CD4-positive, alpha-beta T cell (primary cell): ENCODE measurements at regions of chr11 and their contacts with region 1.

Region 1: DNA sequence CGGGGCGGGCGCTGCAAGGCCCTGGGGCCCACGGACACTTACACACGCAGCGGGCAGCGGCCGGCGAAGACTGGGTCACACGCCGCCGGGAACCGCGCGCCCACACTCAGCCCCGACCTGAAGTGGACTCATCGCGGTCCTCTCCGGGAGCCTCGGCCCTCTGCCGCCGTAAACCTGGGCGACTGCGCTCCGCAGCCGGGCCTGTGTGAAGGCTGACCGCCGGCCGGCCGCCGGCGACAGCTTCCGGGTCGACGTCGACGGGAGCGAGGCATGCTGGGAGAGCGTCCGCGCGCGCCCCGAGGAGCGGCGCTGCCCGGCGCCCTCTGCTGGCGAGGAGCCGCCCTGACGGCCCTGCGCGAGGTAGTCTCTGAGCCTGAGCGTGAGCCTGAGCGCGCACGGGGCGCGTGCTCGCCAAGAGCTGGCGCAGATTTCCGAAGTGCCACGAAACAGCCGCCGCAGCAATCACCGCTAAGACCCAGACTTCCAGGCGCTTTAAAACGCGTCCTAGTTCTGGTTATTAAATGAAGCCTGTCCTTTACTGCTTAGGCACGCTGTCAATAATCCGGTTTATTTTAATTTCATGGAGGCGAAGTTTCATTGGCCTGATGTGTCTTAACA is at the start of gene SNX19:
- DNase-seq: peak; percentile 79 to 96 (median 90)
- ATAC-seq: peak; percentile 99
- H3K4me3 ChIP-seq: peak within 1 kb of the TSS; percentile 87
- H3K4me3 Mint-ChIP-seq: peak within 1 kb of the TSS; percentile 91
- H3K27ac ChIP-seq: peak within 1 kb of the TSS; percentile 71 to 72
- H3K27ac Mint-ChIP-seq: peak within 1 kb of the TSS; percentile 87
- H3K4me1 ChIP-seq: peaks cover 28% of the 10 kb centered on the region
- H3K4me1 Mint-ChIP-seq: peaks cover 52% of the 10 kb centered on the region
- H3K27me3 ChIP-seq: no peaks in the 10 kb centered on the region
- H3K27me3 Mint-ChIP-seq: peaks cover 11% of the 10 kb centered on the region
- CTCF ChIP-seq: peak; percentile 85
- total RNA-seq, gene SNX19: 41.2 to 43.8 TPM

Region 2: DNA sequence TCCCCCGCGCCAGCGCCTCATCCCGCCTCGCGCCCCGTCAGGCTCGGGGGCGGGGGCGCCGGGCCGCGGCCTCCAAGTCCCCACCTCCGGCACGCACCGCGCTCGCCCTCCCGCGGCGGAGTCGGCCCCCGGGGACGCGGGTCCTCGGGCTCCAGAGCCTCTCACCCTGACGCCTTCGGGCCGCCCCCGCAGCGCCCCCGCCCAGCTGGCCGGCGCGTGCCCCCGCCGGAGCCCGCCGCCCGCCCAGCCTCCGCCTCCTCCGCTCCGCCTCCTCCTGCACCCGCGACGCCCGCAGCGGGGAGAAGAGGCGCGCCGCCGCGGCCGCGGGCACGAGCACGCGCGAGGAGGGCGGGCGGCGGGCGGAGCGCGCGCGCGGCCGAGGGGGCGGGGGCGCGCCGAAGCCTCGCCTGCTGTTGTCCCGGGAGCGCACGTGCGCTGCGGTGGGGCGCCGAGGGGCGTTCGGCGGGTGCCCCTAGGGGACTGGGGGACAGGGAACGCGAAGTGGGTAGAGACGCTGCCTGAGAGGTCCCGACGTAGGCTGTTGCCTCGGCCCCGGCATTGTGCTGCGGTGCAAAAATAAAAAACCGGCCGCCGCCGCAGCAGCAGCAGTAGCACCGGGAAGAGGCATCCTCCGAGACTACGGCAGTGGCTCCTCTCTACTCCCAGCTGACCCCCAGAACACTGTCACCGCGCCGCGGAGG is 1636.9 kb before region 1 on chr11:
- CTCF ChIA-PET with region 1: no interaction called
- POLR2A ChIA-PET with region 1: no interaction called
- intact Hi-C with region 1: loop called in 1 of 2 experiments (anchors 5 kb)
- DNase-seq: peak; percentile 50 to 89 (median 72)
- ATAC-seq: peak; percentile 80
- H3K4me3 ChIP-seq: peak overlapping the region; percentile 65
- H3K4me3 Mint-ChIP-seq: peak overlapping the region; percentile 88
- H3K27ac ChIP-seq: no peak overlapping the region
- H3K27ac Mint-ChIP-seq: peak overlapping the region; percentile 66
- H3K4me1 ChIP-seq: peaks cover 16% of the 10 kb centered on the region
- H3K4me1 Mint-ChIP-seq: peaks cover 41% of the 10 kb centered on the region
- H3K27me3 ChIP-seq: peaks cover 11 to 12% of the 10 kb centered on the region in 2 experiments
- H3K27me3 Mint-ChIP-seq: peaks cover 18% of the 10 kb centered on the region
- CTCF ChIP-seq: no peak

Region 3: GRCh38 chr11:129950101-129951091 is 966.0 kb before region 1 on chr11:
- CTCF ChIA-PET with region 1: no interaction called
- POLR2A ChIA-PET with region 1: no interaction called
- intact Hi-C with region 1: no loop called
- DNase-seq: peak in 2 of 14 experiments; percentile 2 to 15
- ATAC-seq: no peak
- H3K4me3 ChIP-seq: no peak overlapping the region
- H3K4me3 Mint-ChIP-seq: no peak overlapping the region
- H3K27ac ChIP-seq: no peak overlapping the region
- H3K27ac Mint-ChIP-seq: no peak overlapping the region
- H3K4me1 ChIP-seq: no peaks in the 10 kb centered on the region
- H3K4me1 Mint-ChIP-seq: no peaks in the 10 kb centered on the region
- H3K27me3 ChIP-seq: no peaks in the 10 kb centered on the region
- H3K27me3 Mint-ChIP-seq: no peaks in the 10 kb centered on the region
- CTCF ChIP-seq: no peak

Region 4: DNA sequence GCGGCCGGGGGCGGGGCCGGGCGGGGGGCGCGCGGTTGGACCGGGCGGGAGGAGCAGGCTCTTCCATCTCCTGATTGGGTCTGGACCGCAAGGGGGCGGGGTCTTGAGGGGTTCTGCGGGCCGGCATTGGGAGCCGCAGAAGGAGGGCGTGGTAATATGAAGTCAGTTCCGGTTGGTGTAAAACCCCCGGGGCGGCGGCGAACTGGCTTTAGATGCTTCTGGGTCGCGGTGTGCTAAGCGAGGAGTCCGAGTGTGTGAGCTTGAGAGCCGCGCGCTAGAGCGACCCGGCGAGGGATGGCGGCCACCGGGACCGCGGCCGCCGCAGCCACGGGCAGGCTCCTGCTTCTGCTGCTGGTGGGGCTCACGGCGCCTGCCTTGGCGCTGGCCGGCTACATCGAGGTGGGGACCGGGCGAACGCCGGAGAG is 846.7 kb before region 1 on chr11 and contains the start of gene APLP2:
- CTCF ChIA-PET with region 1: no interaction called
- POLR2A ChIA-PET with region 1: no interaction called
- intact Hi-C with region 1: loop called in 1 of 2 experiments (anchors 10 kb)
- DNase-seq: peak; percentile 92 to 99 (median 97)
- ATAC-seq: peak; percentile 92
- H3K4me3 ChIP-seq: peak within 1 kb of the TSS; percentile 64
- H3K4me3 Mint-ChIP-seq: peak within 1 kb of the TSS; percentile 99
- H3K27ac ChIP-seq: peak within 1 kb of the TSS; percentile 58 to 78
- H3K27ac Mint-ChIP-seq: peak within 1 kb of the TSS; percentile 92
- H3K4me1 ChIP-seq: peaks cover 20% of the 10 kb centered on the region
- H3K4me1 Mint-ChIP-seq: peaks cover 27% of the 10 kb centered on the region
- H3K27me3 ChIP-seq: no peaks in the 10 kb centered on the region
- H3K27me3 Mint-ChIP-seq: peaks cover 4% of the 10 kb centered on the region
- CTCF ChIP-seq: no peak
- total RNA-seq, gene APLP2: 28.8 to 29.5 TPM

Region 5: DNA sequence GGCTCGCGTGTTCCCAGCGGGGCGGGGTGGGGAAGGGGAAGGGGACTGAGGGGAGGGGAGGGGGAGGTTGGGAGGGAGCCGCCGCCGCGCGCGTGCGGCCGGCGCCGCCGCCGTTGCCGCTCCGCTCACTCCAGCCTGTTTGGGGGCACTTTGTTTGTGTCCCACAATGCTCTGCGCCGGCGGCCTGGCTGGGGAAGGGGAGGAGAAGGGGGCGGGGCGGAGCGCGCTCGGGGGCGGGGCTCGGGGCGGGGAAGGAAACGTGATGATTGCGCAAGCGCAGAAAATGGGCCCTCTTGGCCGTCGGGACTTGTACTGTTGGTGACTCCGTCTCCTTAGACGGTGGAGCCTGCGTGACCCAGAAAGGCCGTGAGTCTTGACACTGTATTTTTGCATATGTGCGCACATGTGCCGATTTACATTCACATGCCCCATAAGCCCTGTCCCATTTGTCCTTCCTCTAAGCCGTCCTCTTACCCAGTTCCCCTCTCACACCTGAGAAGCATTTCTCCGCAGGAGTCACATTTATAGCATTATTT is 601.5 kb before region 1 on chr11 and contains the start of gene ZBTB44:
- CTCF ChIA-PET with region 1: interaction called, 6 read pairs
- POLR2A ChIA-PET with region 1: no interaction called
- intact Hi-C with region 1: loop called in 1 of 2 experiments (anchors 5 kb)
- DNase-seq: peak; percentile 87 to 95 (median 92)
- ATAC-seq: peak; percentile 78
- H3K4me3 ChIP-seq: peak within 1 kb of the TSS; percentile 80
- H3K4me3 Mint-ChIP-seq: peak within 1 kb of the TSS; percentile 93
- H3K27ac ChIP-seq: peak within 1 kb of the TSS; percentile 69 to 87
- H3K27ac Mint-ChIP-seq: peak within 1 kb of the TSS; percentile 97
- H3K4me1 ChIP-seq: peaks cover 16% of the 10 kb centered on the region
- H3K4me1 Mint-ChIP-seq: peaks cover 48% of the 10 kb centered on the region
- H3K27me3 ChIP-seq: no peaks in the 10 kb centered on the region
- H3K27me3 Mint-ChIP-seq: no peaks in the 10 kb centered on the region
- CTCF ChIP-seq: no peak
- total RNA-seq, gene ZBTB44: 33.9 to 41.6 TPM

Region 6: GRCh38 chr11:130894322-130895025 is 21.9 kb before region 1 on chr11:
- CTCF ChIA-PET with region 1: interaction called, 11 read pairs
- POLR2A ChIA-PET with region 1: interaction called, 3 read pairs
- intact Hi-C with region 1: loop called in 1 of 2 experiments (anchors 1 kb)
- DNase-seq: peak; percentile 29 to 82 (median 58)
- ATAC-seq: peak; percentile 95
- H3K4me3 ChIP-seq: no peak overlapping the region
- H3K4me3 Mint-ChIP-seq: no peak overlapping the region
- H3K27ac ChIP-seq: no peak overlapping the region
- H3K27ac Mint-ChIP-seq: peak overlapping the region; percentile 24
- H3K4me1 ChIP-seq: no peaks in the 10 kb centered on the region
- H3K4me1 Mint-ChIP-seq: peaks cover 8% of the 10 kb centered on the region
- H3K27me3 ChIP-seq: no peaks in the 10 kb centered on the region
- H3K27me3 Mint-ChIP-seq: no peaks in the 10 kb centered on the region
- CTCF ChIP-seq: peak; percentile 93

Region 7: GRCh38 chr11:130904380-130904779 is 12.0 kb before region 1 on chr11:
- CTCF ChIA-PET with region 1: interaction called, 21 read pairs
- POLR2A ChIA-PET with region 1: interaction called, 13 read pairs
- intact Hi-C with region 1: no loop called
- DNase-seq: no peak
- ATAC-seq: no peak
- H3K4me3 ChIP-seq: no peak overlapping the region
- H3K4me3 Mint-ChIP-seq: no peak overlapping the region
- H3K27ac ChIP-seq: no peak overlapping the region
- H3K27ac Mint-ChIP-seq: no peak overlapping the region
- H3K4me1 ChIP-seq: no peaks in the 10 kb centered on the region
- H3K4me1 Mint-ChIP-seq: peaks cover 20% of the 10 kb centered on the region
- H3K27me3 ChIP-seq: no peaks in the 10 kb centered on the region
- H3K27me3 Mint-ChIP-seq: no peaks in the 10 kb centered on the region
- CTCF ChIP-seq: no peak

Region 8: DNA sequence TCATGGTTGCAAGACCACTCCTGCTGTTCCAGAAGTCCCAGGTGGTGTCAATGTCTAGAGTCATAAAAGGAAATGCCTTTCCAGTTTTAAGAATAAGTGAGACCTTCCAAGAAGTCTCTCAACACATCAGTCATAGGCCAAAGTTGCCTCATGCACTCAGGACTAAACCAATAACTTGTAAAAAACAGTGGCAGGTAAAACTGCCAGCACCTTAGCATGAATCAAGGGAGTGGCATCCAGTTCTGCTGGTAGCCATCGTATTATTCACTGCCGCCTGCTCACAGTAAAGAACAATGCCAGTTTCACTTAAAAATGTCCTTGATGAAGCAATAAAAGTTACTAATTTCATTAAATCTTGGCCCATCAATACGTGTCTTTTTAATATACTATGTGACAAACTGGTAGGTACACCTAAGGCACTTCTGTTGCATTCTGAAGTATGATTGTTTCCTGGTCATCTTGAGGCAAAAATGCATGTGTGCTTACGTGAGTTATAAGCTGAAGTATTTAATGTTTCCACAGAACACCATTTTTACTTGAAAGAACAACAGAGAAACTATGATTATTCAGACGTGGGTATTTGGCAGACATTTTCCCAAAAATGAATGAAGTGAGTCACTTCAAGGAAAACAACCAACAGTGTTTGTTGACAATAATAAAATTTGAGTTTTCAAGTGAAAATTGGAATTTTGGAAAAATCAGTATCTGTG is 125.1 kb after region 1 on chr11:
- CTCF ChIA-PET with region 1: no interaction called
- POLR2A ChIA-PET with region 1: no interaction called
- intact Hi-C with region 1: no loop called
- DNase-seq: no peak
- ATAC-seq: no peak
- H3K4me3 ChIP-seq: no peak overlapping the region
- H3K4me3 Mint-ChIP-seq: no peak overlapping the region
- H3K27ac ChIP-seq: no peak overlapping the region
- H3K27ac Mint-ChIP-seq: no peak overlapping the region
- H3K4me1 ChIP-seq: no peaks in the 10 kb centered on the region
- H3K4me1 Mint-ChIP-seq: no peaks in the 10 kb centered on the region
- H3K27me3 ChIP-seq: peaks cover 0 to 4% of the 10 kb centered on the region in 2 experiments
- H3K27me3 Mint-ChIP-seq: peaks cover 14% of the 10 kb centered on the region
- CTCF ChIP-seq: no peak